Activated CD4-positive, alpha-beta memory T cell treated with anti-CD3 and anti-CD28 coated beads for 36 hours (primary cell): ENCODE measurements at regions of chr3 and their contacts with region 1.

Region 1: GRCh38 chr3:46895204-46895660 is 17.7 kb downstream of the PTH1R start:
- DNase-seq: peak; percentile 83
- H3K4me3 Mint-ChIP-seq: no peak overlapping the region
- H3K27ac Mint-ChIP-seq: no peak overlapping the region
- H3K4me1 Mint-ChIP-seq: peaks cover 7% of the 10 kb centered on the region
- H3K27me3 Mint-ChIP-seq: peaks cover 49% of the 10 kb centered on the region

Region 2: DNA sequence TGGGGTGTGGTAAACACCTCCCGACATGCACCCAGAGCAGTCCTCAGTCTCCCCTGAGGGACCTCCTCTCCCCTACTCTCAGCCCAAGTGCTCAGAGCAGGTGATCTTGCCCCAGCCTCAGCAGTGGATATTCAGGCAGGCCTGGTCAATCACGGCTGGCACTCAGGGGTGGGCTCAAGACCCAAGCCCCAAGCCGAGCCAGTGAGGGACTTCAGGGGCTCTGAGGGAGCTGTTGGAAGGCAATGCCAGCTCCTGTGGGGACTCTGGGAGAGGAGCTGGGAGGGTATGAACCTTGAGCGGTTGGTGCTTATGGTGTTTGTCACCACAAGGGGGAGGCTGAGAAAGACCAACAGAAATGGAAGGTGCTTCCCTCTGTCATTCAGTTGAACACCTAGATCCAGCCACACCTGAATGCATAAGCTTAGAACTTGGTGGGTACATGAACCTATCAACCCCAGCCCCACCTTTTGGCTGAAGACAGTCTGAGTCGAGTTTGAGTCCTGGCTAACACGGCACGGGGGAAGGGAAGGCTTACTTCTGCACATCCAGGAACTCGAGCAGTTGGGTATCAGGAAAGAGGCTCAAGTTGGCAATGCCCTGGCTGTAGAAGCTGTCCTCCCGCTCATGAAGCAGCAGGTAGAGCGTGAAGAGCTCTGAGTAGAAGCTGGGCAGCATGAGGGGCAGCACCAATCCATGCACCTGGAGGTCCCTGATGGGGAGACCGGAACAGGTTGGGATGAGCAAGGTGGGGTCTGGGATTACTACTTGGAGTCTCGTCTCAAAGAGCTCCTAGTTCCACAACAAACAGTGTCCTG is 221.0 kb before region 1 on chr3:
- CTCF ChIA-PET with region 1: no interaction called
- POLR2A ChIA-PET with region 1: no interaction called
- intact Hi-C with region 1: no loop called
- DNase-seq: no peak
- H3K4me3 Mint-ChIP-seq: no peak overlapping the region
- H3K27ac Mint-ChIP-seq: no peak overlapping the region
- H3K4me1 Mint-ChIP-seq: no peaks in the 10 kb centered on the region
- H3K27me3 Mint-ChIP-seq: no peaks in the 10 kb centered on the region

Region 3: DNA sequence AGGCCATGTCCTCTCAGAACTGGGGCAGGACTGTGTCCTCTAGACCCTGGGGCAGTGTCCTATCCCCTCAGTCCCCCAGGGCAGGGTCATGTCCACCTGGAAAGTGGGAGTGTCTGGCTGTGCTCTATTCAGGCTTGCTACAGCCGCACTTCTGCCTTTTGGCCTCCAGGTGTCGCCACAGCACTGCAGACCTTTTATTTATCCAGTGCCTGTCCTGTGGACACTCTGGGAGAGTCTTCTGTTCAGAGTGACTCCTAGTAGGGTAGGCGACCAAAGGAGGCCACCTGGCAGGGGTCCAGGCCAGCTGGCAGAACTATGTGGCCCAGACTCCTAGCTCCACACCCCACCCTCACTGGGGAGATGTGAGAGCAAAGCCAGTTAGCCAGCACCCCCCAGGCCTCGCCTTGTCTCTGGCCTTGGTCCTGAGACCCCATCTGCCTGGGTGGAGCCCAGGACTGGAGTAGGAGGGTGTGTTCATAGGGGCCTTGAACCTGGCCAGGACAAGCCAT is 190.2 kb before region 1 on chr3:
- CTCF ChIA-PET with region 1: interaction called, 19 read pairs
- POLR2A ChIA-PET with region 1: no interaction called
- intact Hi-C with region 1: loop called (anchors 1 kb)
- DNase-seq: peak; percentile 77
- H3K4me3 Mint-ChIP-seq: no peak overlapping the region
- H3K27ac Mint-ChIP-seq: no peak overlapping the region
- H3K4me1 Mint-ChIP-seq: peaks cover 10% of the 10 kb centered on the region
- H3K27me3 Mint-ChIP-seq: peaks cover 2% of the 10 kb centered on the region

Region 4: GRCh38 chr3:46845791-46846623 is 49.2 kb before region 1 on chr3:
- CTCF ChIA-PET with region 1: interaction called, 17 read pairs
- POLR2A ChIA-PET with region 1: no interaction called
- intact Hi-C with region 1: no loop called
- DNase-seq: peak; percentile 81
- H3K4me3 Mint-ChIP-seq: peak overlapping the region; percentile 65
- H3K27ac Mint-ChIP-seq: no peak overlapping the region
- H3K4me1 Mint-ChIP-seq: peaks cover 5% of the 10 kb centered on the region
- H3K27me3 Mint-ChIP-seq: peaks cover 1% of the 10 kb centered on the region